IMR-90 (cell line): ENCODE measurements at regions of chr3 and their contacts with region 1.

Region 1: DNA sequence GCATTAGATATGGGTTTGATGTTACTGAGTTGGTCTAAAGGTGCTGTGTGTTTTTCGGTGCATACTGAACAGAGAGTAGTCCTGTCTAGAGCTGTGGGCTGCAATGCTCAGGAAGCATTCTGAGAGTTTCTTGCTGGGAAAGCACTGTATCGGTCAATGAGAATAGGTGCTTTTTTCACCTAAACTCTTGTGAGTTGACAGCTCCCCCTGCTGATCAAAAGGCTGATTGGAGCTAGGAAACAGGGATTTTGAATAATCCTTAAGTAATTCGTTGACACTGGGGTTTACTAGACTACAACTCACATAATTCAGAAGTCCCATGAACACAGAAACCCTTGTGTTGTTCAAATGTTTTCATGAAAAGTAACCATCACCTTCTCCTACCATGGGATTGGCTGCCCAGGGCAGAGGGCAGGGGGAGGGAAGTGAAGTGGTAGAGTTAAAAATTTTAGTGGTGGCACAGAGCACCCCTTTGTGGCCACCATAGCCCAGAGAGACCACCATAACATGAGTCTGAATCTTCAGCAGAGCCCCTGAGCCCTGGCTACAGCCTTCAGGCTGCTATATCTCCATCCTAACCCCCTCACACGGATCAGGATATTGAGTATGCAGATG is 13.0 kb upstream of the MANF start:
- DNase-seq: peak; percentile 76
- ATAC-seq: peak; percentile 89
- H3K4me3 ChIP-seq: no peak overlapping the region
- H3K27ac ChIP-seq: no peak overlapping the region
- H3K4me1 ChIP-seq: no peaks in the 10 kb centered on the region
- H3K27me3 ChIP-seq: peaks cover 6% of the 10 kb centered on the region
- CTCF ChIP-seq: peak; percentile 87
- POLR2A ChIP-seq: no peak
- RAD21 ChIP-seq: peak; percentile 93

Region 2: DNA sequence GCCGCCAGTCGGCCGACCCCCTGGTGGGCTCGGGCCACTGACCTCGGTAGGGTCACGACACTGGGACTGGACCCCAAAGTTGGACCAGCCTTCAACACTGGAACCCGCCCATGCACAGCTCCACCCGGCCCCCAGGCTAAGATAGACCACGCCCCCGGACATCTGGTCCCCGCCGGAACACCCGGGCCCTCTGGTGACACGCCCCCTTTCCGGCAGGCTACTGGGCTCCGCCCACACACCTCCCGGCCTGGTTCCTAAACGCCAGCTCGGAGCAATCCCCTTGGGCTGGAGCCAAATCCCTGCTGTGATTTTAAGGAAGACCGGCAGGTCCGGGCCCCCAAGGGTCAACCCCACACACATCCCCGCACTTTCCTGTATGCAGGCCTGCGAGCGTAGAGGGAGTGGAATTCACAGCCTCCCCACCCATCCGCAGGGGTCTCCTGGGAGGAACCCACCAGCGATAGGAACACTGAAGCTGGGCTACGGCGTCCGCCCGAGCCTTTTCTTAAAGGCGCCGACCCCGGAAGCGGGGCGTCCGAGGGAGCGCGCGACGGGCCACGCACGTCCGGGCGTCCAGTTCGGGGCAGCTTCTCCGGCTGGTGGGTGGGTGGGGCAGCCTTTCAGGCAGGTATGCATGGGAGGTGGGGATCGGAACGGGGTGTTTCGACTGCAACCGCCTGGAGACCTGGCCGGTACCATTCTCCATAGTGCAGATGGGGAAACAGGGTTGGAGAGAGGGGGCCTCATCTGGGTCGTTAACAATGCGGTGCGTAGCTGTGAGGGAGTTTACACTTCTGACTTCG is 802.9 kb before region 1 on chr3 and contains the start of gene HEMK1:
- CTCF ChIA-PET with region 1: no interaction called
- POLR2A ChIA-PET with region 1: no interaction called
- dilution Hi-C with region 1: no loop called
- in situ Hi-C with region 1: loop called (anchors 5 kb)
- intact Hi-C with region 1: no loop called
- DNase-seq: peak; percentile 91
- ATAC-seq: peak; percentile 81
- H3K4me3 ChIP-seq: peak within 1 kb of the TSS; percentile 78
- H3K27ac ChIP-seq: peak within 1 kb of the TSS; percentile 96
- H3K4me1 ChIP-seq: peaks cover 5% of the 10 kb centered on the region
- H3K27me3 ChIP-seq: no peaks in the 10 kb centered on the region
- CTCF ChIP-seq: no peak
- POLR2A ChIP-seq: peak; percentile 69
- RAD21 ChIP-seq: no peak
- total RNA-seq, gene HEMK1: 12.5 and 17.2 TPM in 2 replicates

Region 3: GRCh38 chr3:50961386-50961785 is 410.7 kb before region 1 on chr3:
- CTCF ChIA-PET with region 1: no interaction called
- POLR2A ChIA-PET with region 1: no interaction called
- dilution Hi-C with region 1: no loop called
- in situ Hi-C with region 1: loop called (anchors 10 kb)
- intact Hi-C with region 1: no loop called
- DNase-seq: no peak
- ATAC-seq: no peak
- H3K4me3 ChIP-seq: no peak overlapping the region
- H3K27ac ChIP-seq: no peak overlapping the region
- H3K4me1 ChIP-seq: no peaks in the 10 kb centered on the region
- H3K27me3 ChIP-seq: no peaks in the 10 kb centered on the region
- CTCF ChIP-seq: no peak
- POLR2A ChIP-seq: no peak
- RAD21 ChIP-seq: no peak

Region 4: DNA sequence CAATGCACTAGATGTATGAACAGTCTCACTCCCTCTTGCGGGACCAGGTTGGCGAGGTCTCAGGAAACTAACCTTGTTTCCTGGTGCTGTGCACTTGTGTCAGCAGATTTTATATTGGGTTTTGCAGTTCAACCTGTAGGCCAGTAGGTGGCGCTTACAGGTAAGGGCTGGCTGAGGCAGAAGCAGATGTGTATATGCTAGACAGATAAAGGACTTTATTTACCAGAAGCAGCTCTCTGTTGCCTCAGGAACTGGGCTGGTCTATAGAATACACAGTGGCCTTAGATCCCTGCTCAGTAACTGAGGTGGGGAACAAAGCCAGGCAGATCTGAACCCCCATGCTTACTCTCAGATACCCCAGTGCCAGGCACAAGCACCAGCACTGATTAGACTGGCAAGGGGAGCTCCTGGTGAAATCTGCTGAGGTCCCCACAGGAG is 400.5 kb before region 1 on chr3:
- CTCF ChIA-PET with region 1: no interaction called
- POLR2A ChIA-PET with region 1: no interaction called
- dilution Hi-C with region 1: no loop called
- in situ Hi-C with region 1: loop called (anchors 10 kb)
- intact Hi-C with region 1: loop called (anchors 2 kb)
- DNase-seq: peak; percentile 45
- ATAC-seq: peak; percentile 81
- H3K4me3 ChIP-seq: no peak overlapping the region
- H3K27ac ChIP-seq: no peak overlapping the region
- H3K4me1 ChIP-seq: no peaks in the 10 kb centered on the region
- H3K27me3 ChIP-seq: no peaks in the 10 kb centered on the region
- CTCF ChIP-seq: peak; percentile 74
- POLR2A ChIP-seq: no peak
- RAD21 ChIP-seq: peak; percentile 70

Region 5: GRCh38 chr3:51099794-51100535 is 272.1 kb before region 1 on chr3:
- CTCF ChIA-PET with region 1: interaction called, 15 read pairs
- POLR2A ChIA-PET with region 1: no interaction called
- dilution Hi-C with region 1: loop called (anchors 25 kb)
- in situ Hi-C with region 1: loop called (anchors 5 kb)
- intact Hi-C with region 1: loop called (anchors 1 kb)
- DNase-seq: peak; percentile 47
- ATAC-seq: peak; percentile 91
- H3K4me3 ChIP-seq: no peak overlapping the region
- H3K27ac ChIP-seq: no peak overlapping the region
- H3K4me1 ChIP-seq: no peaks in the 10 kb centered on the region
- H3K27me3 ChIP-seq: no peaks in the 10 kb centered on the region
- CTCF ChIP-seq: peak; percentile 80
- POLR2A ChIP-seq: no peak
- RAD21 ChIP-seq: peak; percentile 63

Region 6: DNA sequence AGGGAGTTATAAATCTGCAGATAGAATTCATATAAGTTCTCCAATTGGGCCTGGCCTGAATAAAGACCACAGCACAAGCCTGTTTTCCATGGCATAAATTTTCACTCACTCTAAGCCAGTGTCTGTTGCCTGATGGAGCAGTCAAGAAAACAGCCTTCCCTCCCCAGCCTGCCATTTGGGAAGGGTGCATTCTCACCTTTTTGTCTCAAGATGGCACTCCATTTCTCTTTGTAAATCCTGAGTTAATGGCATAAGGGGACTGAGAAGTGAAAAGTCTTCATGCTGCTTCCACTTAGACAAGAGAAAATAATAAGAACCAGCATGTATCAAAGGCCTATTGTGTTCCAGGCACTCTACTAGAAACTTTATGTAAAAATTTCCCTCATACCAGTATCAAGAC is 102.6 kb before region 1 on chr3:
- CTCF ChIA-PET with region 1: interaction called, 5 read pairs
- POLR2A ChIA-PET with region 1: no interaction called
- dilution Hi-C with region 1: no loop called
- in situ Hi-C with region 1: no loop called
- intact Hi-C with region 1: loop called (anchors 1 kb)
- DNase-seq: no peak
- ATAC-seq: no peak
- H3K4me3 ChIP-seq: no peak overlapping the region
- H3K27ac ChIP-seq: no peak overlapping the region
- H3K4me1 ChIP-seq: no peaks in the 10 kb centered on the region
- H3K27me3 ChIP-seq: no peaks in the 10 kb centered on the region
- CTCF ChIP-seq: peak; percentile 34
- POLR2A ChIP-seq: no peak
- RAD21 ChIP-seq: peak; percentile 35; the same call in 1 of the 2 replicates

Region 7: GRCh38 chr3:51311055-51311454 is 61.0 kb before region 1 on chr3:
- CTCF ChIA-PET with region 1: no interaction called
- POLR2A ChIA-PET with region 1: no interaction called
- dilution Hi-C with region 1: no loop called
- in situ Hi-C with region 1: no loop called
- intact Hi-C with region 1: loop called (anchors 2 kb)
- DNase-seq: peak; percentile 33
- ATAC-seq: peak; percentile 64
- H3K4me3 ChIP-seq: no peak overlapping the region
- H3K27ac ChIP-seq: no peak overlapping the region
- H3K4me1 ChIP-seq: no peaks in the 10 kb centered on the region
- H3K27me3 ChIP-seq: peaks cover 4% of the 10 kb centered on the region; the same call in 1 of the 2 replicates
- CTCF ChIP-seq: peak; percentile 42
- POLR2A ChIP-seq: no peak
- RAD21 ChIP-seq: no peak; the same call in 1 of the 2 replicates

Region 8: GRCh38 chr3:51982782-51983577 is 610.9 kb after region 1 on chr3 and contains the start of gene ACY1:
- CTCF ChIA-PET with region 1: no interaction called
- POLR2A ChIA-PET with region 1: no interaction called
- dilution Hi-C with region 1: no loop called
- in situ Hi-C with region 1: no loop called
- intact Hi-C with region 1: no loop called
- DNase-seq: peak; percentile 81
- ATAC-seq: peak; percentile 88
- H3K4me3 ChIP-seq: peak within 1 kb of the TSS; percentile 63
- H3K27ac ChIP-seq: peak within 1 kb of the TSS; percentile 90
- H3K4me1 ChIP-seq: peaks cover 11% of the 10 kb centered on the region
- H3K27me3 ChIP-seq: no peaks in the 10 kb centered on the region
- CTCF ChIP-seq: no peak
- POLR2A ChIP-seq: peak; percentile 74
- RAD21 ChIP-seq: no peak
- total RNA-seq, gene ACY1: 21.1 and 22.0 TPM in 2 replicates